ENCODE measurements at regions of chr6 and their contacts with region 1.

Region 1: GRCh38 chr6:125974214-125974866 is 12.0 kb upstream of the TRMT11 start:
- DNase-seq: peak; percentile 35

Region 2: DNA sequence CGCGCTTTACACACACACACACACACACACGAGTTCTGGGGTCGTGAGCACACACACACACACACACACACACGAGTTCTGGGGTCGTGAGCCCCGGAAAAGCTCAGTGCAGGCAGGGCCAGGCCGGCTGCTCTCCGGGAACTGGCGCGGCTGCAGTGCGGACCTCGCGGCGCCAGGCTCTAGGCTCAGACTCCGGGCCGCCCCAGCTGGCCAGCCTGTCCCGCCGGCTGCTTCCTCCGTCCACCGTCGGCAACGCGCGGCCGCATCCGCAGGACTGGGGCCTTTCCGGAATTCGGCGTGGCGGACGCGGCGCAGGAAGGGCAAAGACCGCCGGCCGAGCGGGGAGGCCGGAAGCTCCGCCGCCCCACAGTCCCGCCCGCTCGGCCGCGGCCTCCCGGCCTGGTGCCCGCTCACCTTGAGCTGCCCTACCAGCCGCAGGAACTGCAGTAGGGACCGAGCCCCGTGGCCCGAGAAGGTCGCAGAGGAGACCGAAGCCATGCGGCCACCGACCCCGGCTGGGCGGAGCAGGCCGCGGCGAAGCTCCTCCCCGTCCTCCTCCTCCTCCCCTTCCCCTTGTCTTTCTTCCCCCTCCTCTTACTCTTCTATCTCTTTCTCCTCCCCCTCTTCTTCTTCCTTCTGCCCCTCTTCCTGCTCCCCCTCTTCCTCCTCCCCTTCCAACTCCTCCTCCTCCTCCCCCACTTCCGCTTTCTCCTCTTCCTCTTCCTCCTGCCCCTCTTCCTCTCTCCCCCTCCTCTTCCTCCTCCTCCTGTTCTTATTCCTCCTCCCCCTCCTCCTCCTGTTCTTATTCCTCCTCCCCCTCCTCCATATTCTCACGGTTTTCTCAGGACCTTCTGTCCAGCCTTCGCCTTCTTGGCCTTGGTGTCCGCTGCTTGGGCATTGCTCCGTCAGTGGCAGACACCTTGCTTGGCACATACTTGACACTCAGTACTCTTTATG is 672.6 kb before region 1 on chr6 and contains the start of gene HDDC2:
- CTCF ChIA-PET with region 1: no interaction called
- POLR2A ChIA-PET with region 1: no interaction called
- DNase-seq: peak; percentile 72

Region 3: GRCh38 chr6:125858427-125859320 is 115.7 kb before region 1 on chr6:
- CTCF ChIA-PET with region 1: interaction called, 13 read pairs
- POLR2A ChIA-PET with region 1: no interaction called
- DNase-seq: peak; percentile 86

Region 4: DNA sequence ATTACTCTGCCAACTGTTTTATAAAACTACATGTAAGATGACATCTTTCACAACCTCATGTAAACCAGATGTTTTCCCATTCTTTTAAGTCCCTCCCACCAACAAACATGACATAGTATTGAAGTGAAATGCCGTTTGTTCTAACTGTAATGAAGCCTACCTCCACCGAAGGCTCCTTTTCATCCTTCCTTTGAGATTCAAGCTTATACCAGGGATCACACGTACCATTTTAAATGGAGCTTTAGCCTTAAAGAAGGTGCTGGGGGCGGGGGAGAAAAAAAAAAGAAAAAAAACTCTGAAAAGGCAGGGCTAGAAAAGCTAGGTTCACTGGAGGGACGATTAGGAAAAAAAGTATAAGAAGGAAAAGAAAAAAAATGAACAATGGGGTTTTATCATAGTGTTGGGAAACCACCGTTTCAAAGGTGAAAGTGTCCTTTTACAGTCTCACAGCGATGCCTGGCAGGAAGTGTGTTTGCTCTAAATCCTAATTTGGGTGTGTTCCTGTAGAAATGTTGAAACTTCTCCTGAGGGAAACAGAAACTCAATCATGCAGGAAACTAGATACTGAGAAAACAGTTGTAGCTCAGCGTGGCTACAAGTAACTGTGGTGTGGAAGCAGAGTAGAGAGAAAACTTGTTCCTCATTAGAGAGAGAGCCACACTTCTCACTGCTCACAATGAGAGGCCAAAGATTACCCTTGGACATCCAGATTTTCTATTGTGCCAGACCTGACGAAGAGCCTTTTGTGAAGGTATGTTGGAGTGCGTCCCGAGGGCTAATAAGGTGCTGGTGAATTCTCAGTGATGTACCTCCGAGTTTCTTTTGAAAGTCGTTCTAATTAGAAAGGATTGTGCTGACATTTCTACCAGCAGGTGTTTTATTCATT is 55.4 kb before region 1 on chr6:
- CTCF ChIA-PET with region 1: no interaction called
- POLR2A ChIA-PET with region 1: no interaction called
- DNase-seq: peak; percentile 54

Region 5: GRCh38 chr6:125940270-125941041 is 33.9 kb before region 1 on chr6:
- CTCF ChIA-PET with region 1: no interaction called
- POLR2A ChIA-PET with region 1: no interaction called
- DNase-seq: no peak

Region 6: DNA sequence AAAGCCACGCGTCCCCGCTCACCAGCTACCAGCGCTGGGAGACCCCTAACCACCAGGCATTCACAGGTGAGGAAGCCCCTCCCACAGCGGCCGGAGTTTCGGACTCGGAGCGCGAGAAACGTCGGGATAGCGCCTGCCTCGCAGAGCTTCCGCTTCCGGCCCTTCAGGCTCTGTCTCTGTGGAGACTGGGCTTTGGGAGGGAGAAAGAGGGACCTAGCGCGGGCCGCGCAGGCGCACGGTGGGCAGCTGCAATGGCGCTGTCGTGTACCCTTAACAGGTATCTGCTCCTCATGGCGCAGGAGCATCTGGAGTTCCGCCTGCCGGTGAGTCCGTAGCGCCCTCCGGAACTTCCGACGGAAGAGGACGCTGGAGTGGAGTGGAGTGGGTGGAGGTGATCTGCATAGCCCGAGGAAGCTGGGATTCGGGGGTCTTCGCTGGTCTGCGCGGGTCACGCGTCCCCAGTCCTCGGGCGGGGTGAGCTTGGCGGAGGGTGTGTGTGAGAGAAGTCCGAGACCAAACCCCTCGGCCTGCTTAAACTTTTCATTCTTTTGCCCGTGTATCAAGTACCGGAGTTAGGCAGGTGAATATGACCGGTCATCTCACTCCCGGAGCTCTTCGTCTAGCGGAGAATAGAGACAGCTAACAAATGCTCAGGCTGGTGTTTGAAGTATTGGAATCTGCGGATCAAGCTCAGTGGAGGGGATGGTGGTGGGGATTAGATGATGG is 12.1 kb after region 1 on chr6 and contains the start of gene TRMT11:
- CTCF ChIA-PET with region 1: interaction called, 7 read pairs
- POLR2A ChIA-PET with region 1: interaction called, 10 read pairs
- DNase-seq: peak; percentile 98

Region 7: GRCh38 chr6:126040826-126041225 is 66.5 kb after region 1 on chr6:
- CTCF ChIA-PET with region 1: no interaction called
- POLR2A ChIA-PET with region 1: no interaction called
- DNase-seq: no peak